ENCODE measurements at regions of chr17 and their contacts with region 1.

Region 1: DNA sequence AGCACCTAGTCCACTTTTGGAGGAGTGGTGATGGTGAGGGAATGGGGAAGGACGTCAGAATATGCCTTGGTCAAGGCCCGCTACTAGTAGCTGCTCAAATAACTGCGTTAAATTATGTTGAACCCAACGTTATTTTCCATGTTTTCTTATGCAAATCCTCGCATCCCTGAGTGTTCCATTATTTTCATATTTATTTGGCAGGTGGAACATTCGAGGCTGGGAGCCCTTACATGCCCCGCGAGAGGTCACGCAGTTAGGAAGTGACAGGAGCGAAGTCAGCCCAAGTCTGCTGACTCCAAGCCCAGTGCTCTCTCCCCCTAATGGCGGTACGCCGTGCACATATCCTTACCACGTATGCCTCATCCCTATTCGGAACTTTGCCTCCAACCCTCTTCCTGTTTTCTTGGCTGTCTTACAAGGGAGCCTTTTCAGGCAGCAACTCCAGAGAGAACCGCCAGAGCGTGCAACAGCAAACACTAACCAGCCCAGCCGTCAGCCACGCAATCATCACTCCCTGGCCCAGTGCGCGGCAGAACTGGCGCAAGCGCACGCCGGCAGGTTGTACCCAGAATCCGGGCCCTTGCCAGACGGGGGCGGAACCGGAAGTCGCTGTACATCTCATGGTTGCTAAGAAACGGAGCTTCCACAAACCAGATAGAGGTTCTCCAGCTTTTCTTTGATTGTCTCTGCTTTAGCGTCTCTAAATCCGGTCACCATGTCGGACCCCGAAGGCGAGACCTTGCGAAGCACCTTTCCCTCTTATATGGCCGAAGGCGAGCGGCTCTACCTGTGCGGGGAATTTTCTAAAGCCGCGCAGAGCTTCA is at the start of gene ODAD4:
- DNase-seq: peak; percentile 95
- ATAC-seq: peak; percentile 99
- H3K4me3 ChIP-seq: peak within 1 kb of the TSS; percentile 51 to 76 (median 70)
- H3K27ac ChIP-seq: peak within 1 kb of the TSS; percentile 62
- H3K4me1 ChIP-seq: peaks cover 42% of the 10 kb centered on the region
- H3K27me3 ChIP-seq: no peaks in the 10 kb centered on the region
- CTCF ChIP-seq: peak; percentile 85
- EP300 ChIP-seq: peak in 1 of 2 experiments; percentile 62; a peak in 1 of 4 replicates
- POLR2A ChIP-seq: peak; percentile 73 to 94
- RAD21 ChIP-seq: peak; percentile 90
- total RNA-seq, gene ODAD4: 0.53 and 0.60 TPM in 2 replicates

Region 2: DNA sequence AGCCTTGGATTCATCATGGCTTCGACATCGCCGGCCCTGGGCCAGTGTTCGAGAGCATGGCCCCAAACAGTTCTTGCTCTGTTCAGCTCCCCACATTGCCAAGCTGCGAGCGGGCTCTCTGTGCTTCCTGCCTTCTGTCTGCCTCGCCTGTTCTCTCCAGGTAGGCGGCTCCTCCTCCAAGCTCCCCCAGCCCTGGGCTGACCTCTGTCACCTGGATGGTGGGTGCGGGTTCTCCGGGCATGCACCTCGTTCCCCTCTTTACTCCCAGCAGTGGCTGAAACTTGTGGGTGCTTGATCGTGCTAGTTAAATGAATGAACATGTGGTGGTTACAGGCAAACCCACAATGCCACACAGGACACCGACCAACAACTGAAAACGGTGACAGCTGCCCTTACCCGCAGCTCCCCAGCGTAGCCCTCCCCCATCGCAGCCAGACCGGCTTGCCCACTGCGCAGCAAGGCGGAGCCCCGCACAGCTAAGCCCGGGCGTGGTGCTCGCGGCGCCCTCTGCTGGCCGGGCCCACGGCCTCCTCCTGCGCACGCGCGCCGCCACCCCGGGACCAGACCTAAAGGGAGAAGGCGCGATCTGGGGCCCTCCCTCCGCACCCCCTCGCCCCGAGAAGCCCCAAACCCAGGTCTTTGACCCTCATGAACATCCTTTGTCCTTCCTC is 264.5 kb before region 1 on chr17:
- CTCF ChIA-PET with region 1: no interaction called
- POLR2A ChIA-PET with region 1: no interaction called
- in situ Hi-C with region 1: no loop called
- intact Hi-C with region 1: no loop called
- DNase-seq: peak; percentile 68
- ATAC-seq: peak; percentile 87
- H3K4me3 ChIP-seq: peak overlapping the region; percentile 54 to 80 (median 55)
- H3K27ac ChIP-seq: no peak overlapping the region
- H3K4me1 ChIP-seq: peaks cover 47% of the 10 kb centered on the region
- H3K27me3 ChIP-seq: peaks cover 0 to 16% of the 10 kb centered on the region in 2 experiments; a peak in 2 of 5 replicates
- CTCF ChIP-seq: peak; percentile 96
- EP300 ChIP-seq: no peak
- POLR2A ChIP-seq: peak in 1 of 2 experiments; percentile 66; a peak in 2 of 4 replicates
- RAD21 ChIP-seq: peak; percentile 54

Region 3: GRCh38 chr17:41786227-41787020 is 143.8 kb before region 1 on chr17 and contains the start of gene JUP:
- CTCF ChIA-PET with region 1: no interaction called
- POLR2A ChIA-PET with region 1: interaction called, 10 read pairs
- in situ Hi-C with region 1: no loop called
- intact Hi-C with region 1: no loop called
- DNase-seq: peak; percentile 99
- ATAC-seq: peak; percentile 97
- H3K4me3 ChIP-seq: peak within 1 kb of the TSS; percentile 60 to 90 (median 71)
- H3K27ac ChIP-seq: peak within 1 kb of the TSS; percentile 62
- H3K4me1 ChIP-seq: peaks cover 34% of the 10 kb centered on the region
- H3K27me3 ChIP-seq: no peaks in the 10 kb centered on the region; a peak in 1 of 5 replicates
- CTCF ChIP-seq: peak; percentile 83
- EP300 ChIP-seq: no peak
- POLR2A ChIP-seq: peak; percentile 89 to 97
- RAD21 ChIP-seq: peak; percentile 93
- total RNA-seq, gene JUP: 20.6 and 20.9 TPM in 2 replicates

Region 4: GRCh38 chr17:41910701-41911391 is 19.4 kb before region 1 on chr17:
- CTCF ChIA-PET with region 1: no interaction called
- POLR2A ChIA-PET with region 1: interaction called, 11 read pairs
- in situ Hi-C with region 1: no loop called
- intact Hi-C with region 1: no loop called
- DNase-seq: no peak
- ATAC-seq: no peak
- H3K4me3 ChIP-seq: no peak overlapping the region
- H3K27ac ChIP-seq: no peak overlapping the region
- H3K4me1 ChIP-seq: peaks cover 71% of the 10 kb centered on the region
- H3K27me3 ChIP-seq: no peaks in the 10 kb centered on the region
- CTCF ChIP-seq: no peak
- EP300 ChIP-seq: no peak
- POLR2A ChIP-seq: no peak
- RAD21 ChIP-seq: no peak

Region 5: DNA sequence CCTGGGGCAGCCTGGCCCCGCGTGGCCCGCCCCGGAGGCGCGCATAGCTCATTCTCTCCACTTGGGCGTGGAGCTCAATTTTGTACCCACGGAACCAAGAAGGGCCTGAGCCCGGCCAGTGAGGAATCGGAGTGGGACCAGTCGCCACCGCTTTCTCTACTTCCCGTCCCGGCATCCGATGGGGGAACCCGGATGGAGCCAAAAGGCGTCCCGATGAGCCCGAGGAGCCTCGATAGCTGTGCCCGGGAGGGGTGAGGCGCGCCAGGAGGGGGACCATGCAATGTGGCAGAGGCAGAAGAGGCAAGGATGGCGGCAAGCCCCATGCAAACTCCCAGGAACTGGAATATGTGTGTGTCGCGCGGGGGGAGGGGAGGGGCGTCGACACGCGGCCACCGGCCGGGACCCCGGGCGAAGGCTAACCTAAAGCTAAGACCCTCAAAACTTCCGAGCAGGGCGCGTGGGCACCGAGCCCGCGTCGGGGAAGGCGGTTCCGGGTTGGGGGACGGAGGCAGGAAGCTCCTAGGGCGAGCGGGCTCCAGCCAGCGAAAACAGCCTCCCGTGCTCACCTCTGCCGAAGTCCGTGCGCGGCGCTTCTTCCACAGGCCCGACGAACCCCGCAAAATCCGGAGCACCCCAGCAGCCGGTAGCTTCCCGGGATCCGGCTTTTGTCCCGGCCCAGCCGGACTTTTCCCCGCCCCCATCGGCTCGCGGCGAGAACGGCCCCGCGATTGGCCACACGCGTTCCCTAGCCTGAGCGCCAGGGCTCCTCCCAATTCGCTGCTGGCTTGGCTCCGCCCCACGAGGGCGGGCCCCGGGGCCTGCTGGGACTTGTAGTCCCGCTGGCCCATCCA is 11.7 kb before region 1 on chr17 and contains the start of gene ACLY:
- CTCF ChIA-PET with region 1: no interaction called
- POLR2A ChIA-PET with region 1: interaction called, 72 read pairs
- in situ Hi-C with region 1: no loop called
- intact Hi-C with region 1: no loop called
- DNase-seq: peak; percentile 97
- ATAC-seq: peak; percentile 93
- H3K4me3 ChIP-seq: peak within 1 kb of the TSS; percentile 96 to 98 (median 97)
- H3K27ac ChIP-seq: peak within 1 kb of the TSS; percentile 81
- H3K4me1 ChIP-seq: peaks cover 71% of the 10 kb centered on the region
- H3K27me3 ChIP-seq: no peaks in the 10 kb centered on the region; a peak in 1 of 5 replicates
- CTCF ChIP-seq: no peak
- EP300 ChIP-seq: 0 out of 4 replicates have a peak, but pooled peaks of 1 of the 2 experiments have one; percentile 45
- POLR2A ChIP-seq: peak; percentile 88 to 97
- RAD21 ChIP-seq: no peak; the same call in none of the 2 replicates
- total RNA-seq, gene ACLY: 218 and 277 TPM in 2 replicates

Region 6: GRCh38 chr17:42456223-42457131 is 526.3 kb after region 1 on chr17:
- CTCF ChIA-PET with region 1: no interaction called
- POLR2A ChIA-PET with region 1: no interaction called
- in situ Hi-C with region 1: no loop called
- intact Hi-C with region 1: no loop called
- DNase-seq: no peak
- ATAC-seq: no peak
- H3K4me3 ChIP-seq: no peak overlapping the region
- H3K27ac ChIP-seq: no peak overlapping the region
- H3K4me1 ChIP-seq: peaks cover 43% of the 10 kb centered on the region
- H3K27me3 ChIP-seq: no peaks in the 10 kb centered on the region; a peak in 1 of 5 replicates
- CTCF ChIP-seq: no peak
- EP300 ChIP-seq: no peak
- POLR2A ChIP-seq: no peak
- RAD21 ChIP-seq: no peak